B cell (primary cell): ENCODE measurements at regions of chr12 and their contacts with region 1.

Region 1: GRCh38 chr12:57063991-57064685 is 14.2 kb upstream of the MYO1A start:
- DNase-seq: peak; percentile 84
- ATAC-seq: peak; percentile 85
- H3K4me3 ChIP-seq: peak overlapping the region in 2 of 5 experiments; percentile 3 to 53
- H3K4me3 Mint-ChIP-seq: peak overlapping the region; percentile 57
- H3K27ac ChIP-seq: peak overlapping the region; percentile 61 to 87
- H3K27ac Mint-ChIP-seq: peak overlapping the region; percentile 46
- H3K4me1 ChIP-seq: peaks cover 14 to 25% of the 10 kb centered on the region in 2 donors
- H3K4me1 Mint-ChIP-seq: peaks cover 38% of the 10 kb centered on the region
- H3K27me3 ChIP-seq: no peaks in the 10 kb centered on the region
- H3K27me3 Mint-ChIP-seq: no peaks in the 10 kb centered on the region
- CTCF ChIP-seq: no peak

Region 2: GRCh38 chr12:57005980-57006808 is 57.9 kb before region 1 on chr12 and contains the start of gene ZBTB39:
- CTCF ChIA-PET with region 1: interaction called, 11 read pairs
- POLR2A ChIA-PET with region 1: no interaction called
- intact Hi-C with region 1: loop called (anchors 1 kb)
- DNase-seq: peak; percentile 84
- ATAC-seq: peak; percentile 92
- H3K4me3 ChIP-seq: peak within 1 kb of the TSS; percentile 39 to 87 (median 70)
- H3K4me3 Mint-ChIP-seq: peak within 1 kb of the TSS; percentile 91
- H3K27ac ChIP-seq: peak within 1 kb of the TSS; percentile 43 to 86
- H3K27ac Mint-ChIP-seq: peak within 1 kb of the TSS; percentile 93
- H3K4me1 ChIP-seq: peaks cover 16 to 21% of the 10 kb centered on the region in 2 donors
- H3K4me1 Mint-ChIP-seq: peaks cover 41% of the 10 kb centered on the region
- H3K27me3 ChIP-seq: no peaks in the 10 kb centered on the region
- H3K27me3 Mint-ChIP-seq: no peaks in the 10 kb centered on the region
- CTCF ChIP-seq: peak; percentile 61
- total RNA-seq, gene ZBTB39: 13.9 and 15.6 TPM in 2 replicates

Region 3: DNA sequence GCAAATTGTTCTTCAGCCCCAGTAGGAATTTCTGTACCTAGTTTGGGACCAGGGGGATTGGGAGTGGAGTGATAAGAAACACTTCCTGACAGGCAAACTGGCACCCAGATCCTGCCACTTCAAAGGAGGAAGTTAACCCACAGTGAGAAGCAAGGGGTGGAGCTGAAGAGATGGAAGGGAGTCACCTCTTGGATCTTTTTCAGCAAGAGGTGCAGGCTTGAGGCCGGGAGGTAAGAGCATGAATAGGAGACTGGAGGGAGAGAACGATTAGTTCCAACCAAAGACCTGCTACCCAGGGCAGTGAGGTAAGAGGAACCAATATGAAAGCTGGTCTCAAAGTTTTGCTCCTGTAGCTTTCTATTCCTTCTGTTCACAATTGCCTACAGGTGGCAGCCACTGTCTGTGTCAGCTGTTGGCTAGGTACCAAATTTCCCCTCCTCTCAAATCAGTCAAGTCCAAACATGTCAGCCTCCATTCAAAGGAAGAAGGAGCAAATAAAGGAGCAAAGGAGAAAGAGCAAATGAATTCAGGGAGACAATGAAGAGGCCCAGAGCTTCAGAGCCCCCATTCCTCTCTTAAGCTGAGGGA is 32.9 kb before region 1 on chr12:
- CTCF ChIA-PET with region 1: interaction called, 70 read pairs
- POLR2A ChIA-PET with region 1: no interaction called
- intact Hi-C with region 1: loop called (anchors 1 kb)
- DNase-seq: peak; percentile 63
- ATAC-seq: peak; percentile 68
- H3K4me3 ChIP-seq: no peak overlapping the region
- H3K4me3 Mint-ChIP-seq: no peak overlapping the region
- H3K27ac ChIP-seq: no peak overlapping the region
- H3K27ac Mint-ChIP-seq: peak overlapping the region; percentile 8
- H3K4me1 ChIP-seq: peaks cover 8 to 14% of the 10 kb centered on the region in 2 donors
- H3K4me1 Mint-ChIP-seq: peaks cover 19% of the 10 kb centered on the region
- H3K27me3 ChIP-seq: no peaks in the 10 kb centered on the region
- H3K27me3 Mint-ChIP-seq: no peaks in the 10 kb centered on the region
- CTCF ChIP-seq: peak; percentile 6

Region 4: DNA sequence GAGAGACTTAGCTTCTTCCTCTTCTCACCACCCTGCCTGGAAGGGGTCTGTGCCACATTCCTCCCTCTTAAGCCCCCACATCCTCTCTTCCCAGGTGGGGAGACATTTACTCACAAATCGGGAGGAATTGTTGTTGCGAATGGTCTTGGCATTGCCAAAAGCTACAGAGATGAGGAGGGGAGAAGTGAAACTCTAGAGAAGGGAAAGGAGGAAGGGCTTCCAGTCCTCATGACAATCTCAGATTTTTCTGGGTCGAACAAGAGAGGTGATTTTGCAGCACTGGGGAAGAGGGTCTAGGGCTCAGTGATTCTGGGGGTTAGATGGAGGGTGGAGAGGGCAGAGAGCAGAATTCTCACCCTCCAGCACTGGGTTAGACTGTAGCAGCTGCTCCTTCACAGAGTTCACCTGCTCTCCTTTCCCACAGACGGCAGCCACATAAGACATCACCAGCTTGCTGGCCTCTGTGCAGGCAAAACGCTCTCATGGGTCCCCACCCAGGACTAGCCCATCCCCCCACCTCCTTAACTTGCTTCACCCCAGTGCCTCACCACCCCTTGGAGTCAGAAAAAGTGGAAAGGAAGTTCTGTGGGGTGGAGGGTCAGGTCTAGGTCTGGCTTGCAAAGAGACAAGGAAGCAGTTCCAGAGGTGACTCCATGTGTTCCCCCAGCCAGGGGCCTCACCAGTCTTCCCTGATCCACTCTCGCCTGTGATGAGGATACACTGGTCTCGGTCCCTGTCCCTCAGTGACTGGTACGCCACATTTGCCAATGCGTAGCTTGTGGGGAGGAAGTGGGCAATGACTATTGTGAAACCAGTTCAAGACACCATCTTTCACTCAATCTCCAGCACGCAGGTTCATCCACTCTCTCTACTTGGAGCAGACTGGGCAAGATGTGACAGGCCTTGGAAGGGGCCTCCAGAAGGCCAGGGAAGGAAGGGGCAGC is 16.9 kb before region 1 on chr12:
- CTCF ChIA-PET with region 1: interaction called, 7 read pairs
- POLR2A ChIA-PET with region 1: interaction called, 7 read pairs
- intact Hi-C with region 1: loop called (anchors 2 kb)
- DNase-seq: peak; percentile 50
- ATAC-seq: peak; percentile 49
- H3K4me3 ChIP-seq: peak overlapping the region in 2 of 5 experiments; percentile 11 to 38
- H3K4me3 Mint-ChIP-seq: peak overlapping the region; percentile 74
- H3K27ac ChIP-seq: no peak overlapping the region
- H3K27ac Mint-ChIP-seq: peak overlapping the region; percentile 82
- H3K4me1 ChIP-seq: peaks cover 18 to 24% of the 10 kb centered on the region in 2 donors
- H3K4me1 Mint-ChIP-seq: peaks cover 26% of the 10 kb centered on the region
- H3K27me3 ChIP-seq: no peaks in the 10 kb centered on the region
- H3K27me3 Mint-ChIP-seq: no peaks in the 10 kb centered on the region
- CTCF ChIP-seq: no peak

Region 5: DNA sequence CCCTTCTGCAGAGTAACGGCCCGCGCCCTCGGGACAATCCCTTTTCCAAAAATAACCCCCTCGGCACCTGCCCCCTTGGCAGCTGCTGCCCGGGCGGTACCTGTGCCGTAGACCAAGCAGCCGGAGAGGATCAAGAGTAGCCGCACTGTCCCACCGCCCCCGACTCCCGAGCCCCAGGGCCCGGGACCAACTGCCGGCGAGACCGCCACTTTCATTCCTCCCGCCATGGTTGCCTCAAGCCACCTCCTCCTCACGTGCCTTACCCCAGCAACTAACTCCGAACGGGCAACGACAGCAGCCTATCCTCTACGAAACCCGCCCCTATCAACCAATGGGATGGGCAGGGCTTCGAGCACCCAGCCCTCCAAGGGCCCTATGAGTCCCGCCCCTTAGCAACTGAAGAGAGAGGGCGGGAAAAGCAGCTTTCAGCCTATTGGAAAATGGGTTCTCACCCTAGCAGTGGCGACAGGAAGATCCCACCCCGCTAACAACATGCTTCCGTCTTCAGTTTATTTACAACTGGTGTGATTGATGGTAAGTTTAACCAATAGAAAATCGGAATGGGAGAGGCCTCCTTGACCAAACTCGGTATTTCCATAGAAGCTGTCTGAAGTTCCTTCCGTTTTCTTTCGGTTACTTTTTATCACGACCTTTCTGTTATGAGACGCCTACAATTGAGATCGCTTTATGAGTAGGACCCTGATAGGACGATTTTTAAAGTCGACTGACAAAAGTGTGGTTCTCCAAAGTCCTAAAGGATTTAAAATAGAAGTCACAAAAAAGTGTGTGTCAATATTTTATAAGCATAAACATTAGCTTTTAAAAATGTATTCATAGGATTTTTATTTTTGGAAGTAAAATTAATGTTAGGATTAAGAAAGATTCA is 14.6 kb after region 1 on chr12 and contains the start of gene NEMP1:
- CTCF ChIA-PET with region 1: interaction called, 23 read pairs
- POLR2A ChIA-PET with region 1: interaction called, 6 read pairs
- intact Hi-C with region 1: loop called (anchors 1 kb)
- DNase-seq: peak; percentile 99
- ATAC-seq: peak; percentile 97
- H3K4me3 ChIP-seq: peak within 1 kb of the TSS; percentile 55 to 97 (median 87)
- H3K4me3 Mint-ChIP-seq: peak within 1 kb of the TSS; percentile 89
- H3K27ac ChIP-seq: peak within 1 kb of the TSS; percentile 75 to 89
- H3K27ac Mint-ChIP-seq: peak within 1 kb of the TSS; percentile 84
- H3K4me1 ChIP-seq: peaks cover 7 to 18% of the 10 kb centered on the region in 2 donors
- H3K4me1 Mint-ChIP-seq: peaks cover 24% of the 10 kb centered on the region
- H3K27me3 ChIP-seq: no peaks in the 10 kb centered on the region
- H3K27me3 Mint-ChIP-seq: no peaks in the 10 kb centered on the region
- CTCF ChIP-seq: no peak
- total RNA-seq, gene NEMP1: 35.0 and 40.1 TPM in 2 replicates

Region 6: GRCh38 chr12:57416039-57416996 is 352.2 kb after region 1 on chr12:
- CTCF ChIA-PET with region 1: no interaction called
- POLR2A ChIA-PET with region 1: no interaction called
- intact Hi-C with region 1: no loop called
- DNase-seq: no peak
- ATAC-seq: no peak
- H3K4me3 ChIP-seq: no peak overlapping the region
- H3K4me3 Mint-ChIP-seq: no peak overlapping the region
- H3K27ac ChIP-seq: no peak overlapping the region
- H3K27ac Mint-ChIP-seq: no peak overlapping the region
- H3K4me1 ChIP-seq: peaks cover 0 to 2% of the 10 kb centered on the region in 2 donors
- H3K4me1 Mint-ChIP-seq: peaks cover 42% of the 10 kb centered on the region
- H3K27me3 ChIP-seq: no peaks in the 10 kb centered on the region
- H3K27me3 Mint-ChIP-seq: no peaks in the 10 kb centered on the region
- CTCF ChIP-seq: no peak

Region 7: GRCh38 chr12:57462251-57462911 is 398.2 kb after region 1 on chr12:
- CTCF ChIA-PET with region 1: no interaction called
- POLR2A ChIA-PET with region 1: no interaction called
- intact Hi-C with region 1: no loop called
- DNase-seq: peak; percentile 96
- ATAC-seq: peak; percentile 64
- H3K4me3 ChIP-seq: peak overlapping the region; percentile 58 to 93 (median 81)
- H3K4me3 Mint-ChIP-seq: peak overlapping the region; percentile 92
- H3K27ac ChIP-seq: peak overlapping the region; percentile 15 to 58
- H3K27ac Mint-ChIP-seq: peak overlapping the region; percentile 93
- H3K4me1 ChIP-seq: peaks cover 23 to 48% of the 10 kb centered on the region in 2 donors
- H3K4me1 Mint-ChIP-seq: peaks cover 40% of the 10 kb centered on the region
- H3K27me3 ChIP-seq: no peaks in the 10 kb centered on the region
- H3K27me3 Mint-ChIP-seq: no peaks in the 10 kb centered on the region
- CTCF ChIP-seq: peak; percentile 88